Lower leg skin (tissue), 4 donors: ENCODE measurements at regions of chr9 and their contacts with region 1.

Region 1: GRCh38 chr9:117564839-117565238 is 139.4 kb upstream of the TLR4 start:
- DNase-seq: no peak
- H3K4me3 ChIP-seq: no peak overlapping the region
- CTCF ChIP-seq: no peak
- POLR2A ChIP-seq: no peak

Region 2: DNA sequence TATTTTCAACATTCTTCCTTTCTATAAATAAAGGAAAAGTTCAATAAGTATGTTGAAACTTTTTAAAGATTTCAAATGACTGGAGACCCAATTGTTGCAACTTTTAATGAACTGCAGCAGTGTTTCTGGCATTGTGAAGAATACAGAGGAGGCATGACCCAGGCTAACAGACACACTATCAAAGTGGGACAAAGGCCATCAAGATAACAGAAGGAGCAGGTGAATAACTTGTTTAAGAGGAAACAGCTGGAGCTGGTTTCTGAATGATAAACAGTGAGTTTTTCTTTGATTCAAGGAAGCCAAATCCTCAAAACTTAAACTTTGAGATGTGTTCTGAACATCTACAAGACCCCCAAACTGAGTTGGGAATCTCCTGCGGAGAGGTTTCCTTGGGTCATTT is 874.0 kb after region 1 on chr9:
- intact Hi-C with region 1: loop called (anchors 5 kb)
- DNase-seq: no peak
- H3K4me3 ChIP-seq: no peak overlapping the region
- CTCF ChIP-seq: no peak
- POLR2A ChIP-seq: no peak